WTC11 (cell line): ENCODE measurements at regions of chr12 and their contacts with region 1.

Region 1: DNA sequence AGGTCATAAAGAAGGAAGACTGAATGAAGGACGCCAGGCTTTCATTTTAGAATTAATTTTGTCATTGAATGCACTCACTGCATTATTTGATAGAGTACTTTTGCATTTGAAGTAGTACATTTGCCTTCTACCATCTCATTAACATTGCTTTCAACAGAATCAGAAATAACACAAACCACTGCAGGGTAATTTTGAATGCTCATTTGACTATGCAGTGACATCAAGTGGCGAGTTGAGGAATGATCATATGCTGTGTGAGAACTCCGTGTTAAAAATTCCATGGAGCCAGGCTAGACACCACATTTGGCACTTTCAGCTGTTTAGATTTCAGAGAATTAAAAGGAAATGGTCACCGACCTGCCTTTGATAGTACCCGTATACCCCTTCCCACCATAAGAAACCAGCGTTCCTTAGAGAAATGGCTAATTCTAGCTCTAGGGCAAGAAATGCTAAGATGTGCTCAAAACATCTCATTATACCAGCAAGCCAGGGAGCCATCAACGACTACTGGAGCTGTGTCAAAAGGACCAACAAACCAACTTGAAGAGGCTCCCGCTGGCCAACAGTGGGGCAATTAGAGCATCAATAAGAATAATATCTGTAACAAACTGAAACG is 16.5 kb downstream of the HEBP1 start:
- DNase-seq: no peak
- ATAC-seq: no peak
- H3K4me3 Mint-ChIP-seq: no peak overlapping the region
- H3K27ac Mint-ChIP-seq: 0 out of 2 replicates have a peak overlapping the region, but pooled peaks have one; percentile 19
- H3K4me1 Mint-ChIP-seq: peaks cover 18% of the 10 kb centered on the region
- H3K27me3 Mint-ChIP-seq: no peaks in the 10 kb centered on the region
- CTCF ChIP-seq: no peak

Region 2: GRCh38 chr12:12916135-12916944 is 67.2 kb before region 1 on chr12:
- CTCF ChIA-PET with region 1: interaction called, 23 read pairs
- POLR2A ChIA-PET with region 1: no interaction called
- DNase-seq: peak; percentile 90
- ATAC-seq: peak; percentile 88
- H3K4me3 Mint-ChIP-seq: no peak overlapping the region
- H3K27ac Mint-ChIP-seq: no peak overlapping the region
- H3K4me1 Mint-ChIP-seq: peaks cover 27% of the 10 kb centered on the region
- H3K27me3 Mint-ChIP-seq: peaks cover 3% of the 10 kb centered on the region
- CTCF ChIP-seq: peak; percentile 98